Activated CD4-positive, alpha-beta T cell treated with anti-CD3 and anti-CD28 coated beads, Interleukin-2, amount 10 ng/mL, durations not matched to agents 24 days and 14 days (primary cell): ENCODE measurements at regions of chr2 and their contacts with region 1.

Region 1: DNA sequence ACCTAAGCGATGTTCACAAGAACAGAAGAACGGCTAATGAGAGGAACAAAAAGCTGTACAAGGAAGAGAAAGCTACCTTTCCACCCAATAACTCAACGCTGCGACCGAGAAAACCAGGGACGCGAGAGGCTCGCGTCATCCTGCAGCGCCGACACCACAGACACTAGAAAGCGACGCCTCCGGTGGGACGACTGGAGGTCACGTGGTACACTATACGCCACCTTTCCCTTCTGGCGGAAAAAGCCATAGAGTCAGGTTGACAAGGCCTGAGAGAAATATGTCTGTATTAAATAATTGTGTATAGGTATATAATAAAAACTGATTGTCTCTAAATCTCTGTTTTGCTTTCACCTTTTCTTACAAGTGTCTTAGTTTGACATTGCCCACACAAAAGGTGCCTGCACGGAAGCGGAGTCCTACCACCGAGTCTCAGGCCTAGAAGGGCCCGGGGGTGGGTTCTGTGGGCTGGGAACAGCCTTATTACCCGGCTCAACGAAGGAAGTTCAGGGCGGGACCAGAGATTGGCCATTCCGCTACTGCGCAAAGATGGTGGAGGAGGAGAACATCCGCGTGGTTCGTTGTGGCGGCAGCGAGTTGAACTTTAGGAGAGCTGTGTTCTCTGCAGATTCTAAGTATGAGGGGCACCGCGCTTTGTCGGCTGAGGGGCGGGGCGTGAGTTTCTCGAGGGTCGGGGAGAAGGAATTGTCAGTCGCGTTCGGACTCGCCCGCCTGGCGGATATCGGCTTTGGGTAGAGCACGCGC is at the start of gene WDR75:
- DNase-seq: peak; percentile 98
- H3K4me3 Mint-ChIP-seq: no peak within 1 kb of the TSS
- H3K27ac Mint-ChIP-seq: peak within 1 kb of the TSS; percentile 99
- H3K4me1 Mint-ChIP-seq: peaks cover 13% of the 10 kb centered on the region
- H3K27me3 Mint-ChIP-seq: peaks cover 7% of the 10 kb centered on the region
- total RNA-seq, gene WDR75: 117 and 121 TPM in 2 replicates

Region 2: GRCh38 chr2:188978291-188979081 is 462.6 kb before region 1 on chr2:
- intact Hi-C with region 1: loop called (anchors 5 kb)
- DNase-seq: no peak
- H3K4me3 Mint-ChIP-seq: peak overlapping the region; percentile 25
- H3K27ac Mint-ChIP-seq: peak overlapping the region; percentile 85
- H3K4me1 Mint-ChIP-seq: peaks cover 9% of the 10 kb centered on the region
- H3K27me3 Mint-ChIP-seq: peaks cover 4% of the 10 kb centered on the region

Region 3: GRCh38 chr2:189302274-189302948 is 138.7 kb before region 1 on chr2:
- intact Hi-C with region 1: no loop called
- DNase-seq: no peak
- H3K4me3 Mint-ChIP-seq: peak overlapping the region; percentile 34
- H3K27ac Mint-ChIP-seq: peak overlapping the region; percentile 71
- H3K4me1 Mint-ChIP-seq: peaks cover 51% of the 10 kb centered on the region
- H3K27me3 Mint-ChIP-seq: no peaks in the 10 kb centered on the region

Region 4: GRCh38 chr2:189580658-189581353 is 139.7 kb after region 1 on chr2 and contains the start of gene SLC40A1:
- intact Hi-C with region 1: loop called (anchors 5 kb)
- DNase-seq: peak; percentile 91
- H3K4me3 Mint-ChIP-seq: peak within 1 kb of the TSS; percentile 84
- H3K27ac Mint-ChIP-seq: peak within 1 kb of the TSS; percentile 35
- H3K4me1 Mint-ChIP-seq: peaks cover 18% of the 10 kb centered on the region
- H3K27me3 Mint-ChIP-seq: peaks cover 34% of the 10 kb centered on the region
- total RNA-seq, gene SLC40A1: 0.78 and 1.4 TPM in 2 replicates

Region 5: GRCh38 chr2:189762551-189763298 is 321.6 kb after region 1 on chr2 and contains the start of gene OSGEPL1:
- intact Hi-C with region 1: loop called (anchors 1 kb)
- DNase-seq: peak; percentile 97
- H3K4me3 Mint-ChIP-seq: peak within 1 kb of the TSS; percentile 97
- H3K27ac Mint-ChIP-seq: peak within 1 kb of the TSS; percentile 98
- H3K4me1 Mint-ChIP-seq: peaks cover 12% of the 10 kb centered on the region
- H3K27me3 Mint-ChIP-seq: no peaks in the 10 kb centered on the region
- total RNA-seq, gene OSGEPL1: 11.1 and 12.2 TPM in 2 replicates